Dorsolateral prefrontal cortex (tissue), 120 donors: ENCODE measurements at regions of chr12 and their contacts with region 1.

Region 1: DNA sequence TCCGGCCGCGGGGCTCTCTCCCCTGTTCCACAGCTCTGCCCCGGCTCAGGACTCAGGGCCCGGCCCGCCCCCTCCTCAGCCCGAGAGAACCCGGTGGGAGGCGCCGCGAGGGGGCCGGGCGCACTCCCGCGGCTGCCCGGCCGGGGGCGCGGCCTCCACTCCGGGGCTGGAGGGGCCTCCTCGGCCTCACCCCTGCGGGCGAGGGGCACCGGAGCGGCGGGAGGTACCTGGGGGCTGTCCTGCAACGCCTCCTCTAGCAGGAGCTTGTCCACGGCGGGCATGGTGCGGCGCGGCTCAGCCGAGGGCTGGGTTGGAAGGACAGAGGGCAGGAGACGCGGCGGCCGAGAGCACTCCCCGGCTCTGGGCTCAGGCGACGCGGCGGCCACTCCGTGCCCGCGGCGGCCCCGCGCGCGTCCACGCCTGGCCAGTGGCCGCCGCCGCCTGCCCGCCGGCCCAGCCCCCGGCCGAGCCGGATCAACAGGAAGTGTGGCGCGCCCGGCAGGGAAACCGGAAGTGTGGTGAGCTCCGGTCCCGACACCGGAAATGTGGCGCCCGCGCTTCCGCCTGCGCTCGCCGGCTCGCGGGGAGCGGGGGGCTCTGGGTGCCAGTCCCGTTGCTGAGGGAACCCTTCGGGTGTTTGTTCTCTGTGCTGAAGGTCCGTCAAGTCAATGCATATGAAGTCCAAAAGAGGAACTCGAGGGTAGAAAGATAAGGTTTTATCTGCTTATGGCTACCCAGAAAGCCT is at the start of gene APPL2:
- DNase-seq: peak; percentile 77 to 93 (median 89)
- H3K4me3 ChIP-seq: peak within 1 kb of the TSS; percentile 45 to 96 (median 88)
- H3K27ac ChIP-seq: peak within 1 kb of the TSS; percentile 58 to 99 (median 95)
- H3K27me3 ChIP-seq: no peaks in the 10 kb centered on the region
- CTCF ChIP-seq: peak in 44 of 56 donors; percentile 12 to 61 (median 30)
- total RNA-seq, gene APPL2: 39.6 to 97.0 (median 66.6) TPM

Region 2: DNA sequence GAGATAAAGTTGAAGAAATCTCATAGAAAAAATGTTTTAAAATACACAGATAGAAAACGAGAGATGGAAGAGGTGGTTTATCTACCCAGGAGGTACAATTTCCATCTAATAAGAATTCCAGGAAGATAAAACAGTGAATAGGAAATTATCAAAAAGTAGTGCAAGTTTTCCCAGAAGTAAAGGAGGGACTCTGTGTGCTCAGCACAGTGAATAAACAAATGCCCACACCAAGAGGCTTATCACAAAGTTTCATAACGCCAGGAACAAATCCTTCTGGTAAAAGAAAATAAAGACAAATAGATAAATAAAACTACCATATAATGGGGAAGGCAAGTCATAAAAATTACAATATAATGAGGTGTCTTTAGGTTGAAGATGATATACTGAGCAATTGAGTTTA is 456.8 kb before region 1 on chr12:
- intact Hi-C with region 1: no loop called
- DNase-seq: no peak
- H3K4me3 ChIP-seq: no peak overlapping the region
- H3K27ac ChIP-seq: no peak overlapping the region
- H3K27me3 ChIP-seq: peaks cover 0 to 3% (median 0%) of the 10 kb centered on the region in 45 donors
- CTCF ChIP-seq: no peak

Region 3: DNA sequence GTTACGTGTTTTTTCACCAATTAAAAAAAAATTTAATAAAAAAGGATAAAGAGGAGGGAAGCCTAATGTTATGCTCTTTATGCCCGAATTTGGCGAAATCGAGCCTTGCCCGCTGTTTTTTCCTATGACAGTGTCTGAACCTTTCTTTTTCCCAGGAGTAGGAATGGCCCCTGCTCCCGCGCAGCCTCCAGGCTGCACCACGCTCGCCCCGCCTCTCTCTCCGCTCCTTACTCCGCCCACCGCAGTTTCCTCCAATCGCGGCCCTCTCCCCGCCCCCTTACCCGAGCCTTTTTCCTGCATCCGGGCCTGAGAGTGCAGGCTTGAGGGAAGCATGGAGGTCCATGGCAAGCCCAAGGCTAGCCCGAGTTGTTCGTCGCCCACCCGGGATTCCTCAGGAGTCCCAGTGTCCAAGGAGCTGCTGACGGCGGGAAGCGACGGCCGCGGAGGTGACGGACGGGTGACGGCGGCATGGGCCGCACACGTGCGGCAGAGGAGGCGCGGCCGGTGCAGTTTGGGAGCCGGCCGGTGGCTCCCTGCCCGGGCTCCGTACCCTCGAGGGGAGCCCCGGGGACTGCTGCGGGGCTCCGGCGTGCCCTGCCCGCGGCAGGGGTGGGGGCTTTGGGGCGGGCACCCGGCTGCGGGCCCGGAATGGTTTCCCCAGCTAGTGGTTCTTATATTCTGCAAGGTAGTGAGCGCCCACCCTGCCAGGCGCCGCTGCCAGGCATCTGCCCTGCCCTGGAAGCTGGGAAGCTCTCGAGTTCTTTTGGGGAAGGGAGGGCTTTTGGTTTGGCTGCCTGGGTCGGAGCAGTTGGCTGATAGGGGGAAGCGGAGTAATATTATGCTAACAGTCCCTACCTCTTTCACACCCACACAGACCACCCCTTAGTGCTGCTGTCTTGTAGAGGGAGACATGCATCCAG is 249.6 kb before region 1 on chr12 and contains the start of gene NOPCHAP1:
- intact Hi-C with region 1: loop called in 1 of 2 experiments (anchors 10 kb)
- DNase-seq: peak; percentile 86 to 96 (median 94)
- H3K4me3 ChIP-seq: peak within 1 kb of the TSS; percentile 48 to 99 (median 92)
- H3K27ac ChIP-seq: peak within 1 kb of the TSS in 48 of 59 donors; percentile 9 to 85 (median 57)
- H3K27me3 ChIP-seq: no peaks in the 10 kb centered on the region
- CTCF ChIP-seq: peak in 20 of 56 donors; percentile 8 to 46 (median 22)
- total RNA-seq, gene NOPCHAP1: 9.1 to 26.6 (median 18.8) TPM

Region 4: DNA sequence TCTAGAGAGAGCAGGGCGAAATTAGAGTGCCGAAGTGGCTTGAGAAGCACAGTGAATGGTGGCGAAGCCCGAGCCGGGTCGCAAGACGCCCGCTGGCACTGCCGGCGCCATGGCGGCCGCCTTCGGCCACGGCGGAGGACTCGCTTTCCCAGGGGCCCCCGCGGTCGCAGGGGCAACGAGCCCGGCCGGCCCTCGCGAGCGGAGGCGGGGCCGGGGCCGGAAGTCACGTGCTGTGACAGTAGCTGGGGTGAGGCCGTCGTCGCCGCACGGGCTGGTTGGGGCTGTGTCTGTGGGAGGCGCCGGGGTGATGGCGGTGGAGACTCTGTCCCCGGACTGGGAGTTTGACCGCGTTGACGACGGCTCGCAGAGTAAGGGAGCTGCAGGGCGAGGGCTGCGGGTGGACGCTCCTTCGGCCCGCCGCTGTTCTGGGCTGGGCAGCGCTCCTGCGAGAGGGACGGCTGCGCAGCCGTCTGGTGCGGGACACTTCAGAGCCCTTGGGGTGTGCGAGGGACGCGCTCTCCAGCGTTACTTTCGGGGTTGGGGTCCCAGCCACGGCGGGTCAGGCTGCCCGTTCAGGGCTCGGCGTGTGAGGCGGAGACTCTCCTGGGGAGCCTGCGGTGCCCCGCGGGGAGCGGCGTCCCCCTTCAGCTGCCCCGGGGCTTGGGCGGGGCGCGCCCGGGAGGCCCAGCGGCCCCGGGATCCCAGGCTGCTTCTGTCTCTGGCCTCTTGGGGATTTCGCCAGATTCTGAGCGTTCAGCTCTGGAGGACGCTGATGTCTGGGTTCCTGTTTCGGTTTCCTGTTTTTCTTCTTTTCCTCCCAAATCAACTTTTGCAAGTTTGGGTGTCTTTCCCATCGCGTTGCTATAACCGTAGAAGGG is 128.2 kb before region 1 on chr12 and contains the start of gene WASHC4:
- intact Hi-C with region 1: loop called (anchors 1 to 5 kb)
- DNase-seq: peak; percentile 88 to 97 (median 94)
- H3K4me3 ChIP-seq: peak within 1 kb of the TSS; percentile 60 to 100 (median 93)
- H3K27ac ChIP-seq: peak within 1 kb of the TSS; percentile 49 to 98 (median 94)
- H3K27me3 ChIP-seq: no peaks in the 10 kb centered on the region
- CTCF ChIP-seq: peak in 25 of 56 donors; percentile 3 to 53 (median 31)
- total RNA-seq, gene WASHC4: 27.1 to 75.9 (median 42.7) TPM

Region 5: DNA sequence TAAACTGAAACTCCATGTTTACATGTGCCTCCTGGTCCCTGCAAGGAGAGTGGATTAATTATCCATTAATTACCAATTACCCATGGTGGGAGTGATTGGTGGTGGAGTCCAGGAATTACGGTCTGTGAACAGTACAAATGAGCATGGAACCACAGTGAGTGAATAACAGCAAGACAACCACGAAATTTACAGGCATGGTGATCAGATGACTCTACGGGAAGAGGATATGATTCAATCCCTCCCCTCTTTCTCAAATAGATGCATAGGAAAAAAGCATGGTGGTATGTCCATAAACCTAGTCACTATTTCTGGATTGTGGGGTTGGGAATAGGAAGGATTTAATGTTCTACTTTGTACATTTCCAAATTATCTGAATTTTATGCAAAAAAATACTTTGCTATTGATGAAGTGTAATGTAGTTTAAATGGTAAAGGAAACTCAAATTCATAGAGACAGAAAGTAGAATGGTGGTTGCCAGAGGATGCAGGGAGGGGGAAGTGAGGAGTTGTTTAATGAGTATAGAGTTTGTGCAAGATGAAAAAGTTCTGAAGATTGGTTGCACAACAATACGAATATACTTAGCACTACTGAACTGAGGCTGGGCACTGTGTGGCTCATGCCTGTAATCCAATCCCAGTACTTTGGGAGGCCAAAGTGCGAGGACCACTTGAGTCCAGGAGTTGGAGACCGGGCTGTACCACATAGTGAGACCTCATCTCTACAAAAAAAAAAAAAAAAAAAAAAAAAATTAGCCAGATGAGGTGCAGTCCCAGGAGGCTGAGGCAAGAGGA is 53.4 kb after region 1 on chr12:
- intact Hi-C with region 1: no loop called
- DNase-seq: no peak
- H3K4me3 ChIP-seq: no peak overlapping the region
- H3K27ac ChIP-seq: no peak overlapping the region
- H3K27me3 ChIP-seq: peaks cover 0 to 22% (median 0%) of the 10 kb centered on the region in 45 donors
- CTCF ChIP-seq: no peak